ENCODE measurements at regions of chr20 and their contacts with region 1.

Region 1: DNA sequence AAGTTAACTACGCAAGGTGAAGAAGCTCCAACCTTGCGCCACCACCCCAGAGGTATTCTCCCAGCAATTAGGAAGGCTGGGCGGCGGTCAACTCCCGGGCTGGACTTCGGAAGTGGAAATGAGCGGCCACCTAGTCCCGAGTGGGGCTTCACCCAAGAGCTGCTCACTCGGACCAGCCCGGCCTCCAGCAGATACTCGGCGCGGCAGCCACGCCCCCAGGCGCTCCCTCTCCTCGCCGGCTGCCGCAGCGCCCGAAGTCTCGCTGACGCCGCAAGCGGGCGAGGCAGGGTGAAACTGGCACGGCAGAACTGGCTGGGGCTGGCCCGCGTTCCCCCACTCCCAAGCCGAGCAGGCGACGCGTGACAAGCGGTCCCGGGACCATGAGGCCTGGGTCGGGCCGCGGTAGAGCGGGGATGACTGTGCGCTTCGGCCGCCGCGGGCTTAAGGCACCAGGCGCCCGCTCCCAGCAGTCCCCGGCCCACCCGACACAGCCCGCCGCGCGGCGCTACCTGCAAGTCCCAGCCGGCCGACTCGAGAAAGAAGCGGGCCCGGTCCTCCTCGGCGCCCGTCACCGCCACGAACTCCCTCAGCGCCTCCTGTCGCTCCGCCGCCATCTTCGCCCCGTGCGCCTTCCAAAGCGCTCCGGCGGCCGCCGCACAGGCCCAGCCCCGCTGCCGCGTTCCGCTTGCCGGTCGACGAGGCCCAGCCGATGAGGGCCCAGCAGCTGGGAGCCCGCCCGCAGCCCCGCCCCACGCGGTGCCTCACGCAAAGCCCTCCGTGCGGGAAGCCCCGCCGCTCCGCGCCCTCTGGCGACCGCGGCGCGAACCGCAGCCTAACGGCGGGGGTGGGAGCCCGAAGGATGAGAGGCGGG is at the start of gene NSFL1C:
- DNase-seq: peak; percentile 91
- H3K4me3 Mint-ChIP-seq: peak within 1 kb of the TSS; percentile 78
- H3K27ac Mint-ChIP-seq: peak within 1 kb of the TSS; percentile 66
- H3K4me1 Mint-ChIP-seq: peaks cover 38% of the 10 kb centered on the region
- H3K27me3 Mint-ChIP-seq: no peaks in the 10 kb centered on the region
- CTCF ChIP-seq: peak; percentile 99
- total RNA-seq, gene NSFL1C: 63.3 and 76.1 TPM in 2 replicates

Region 2: DNA sequence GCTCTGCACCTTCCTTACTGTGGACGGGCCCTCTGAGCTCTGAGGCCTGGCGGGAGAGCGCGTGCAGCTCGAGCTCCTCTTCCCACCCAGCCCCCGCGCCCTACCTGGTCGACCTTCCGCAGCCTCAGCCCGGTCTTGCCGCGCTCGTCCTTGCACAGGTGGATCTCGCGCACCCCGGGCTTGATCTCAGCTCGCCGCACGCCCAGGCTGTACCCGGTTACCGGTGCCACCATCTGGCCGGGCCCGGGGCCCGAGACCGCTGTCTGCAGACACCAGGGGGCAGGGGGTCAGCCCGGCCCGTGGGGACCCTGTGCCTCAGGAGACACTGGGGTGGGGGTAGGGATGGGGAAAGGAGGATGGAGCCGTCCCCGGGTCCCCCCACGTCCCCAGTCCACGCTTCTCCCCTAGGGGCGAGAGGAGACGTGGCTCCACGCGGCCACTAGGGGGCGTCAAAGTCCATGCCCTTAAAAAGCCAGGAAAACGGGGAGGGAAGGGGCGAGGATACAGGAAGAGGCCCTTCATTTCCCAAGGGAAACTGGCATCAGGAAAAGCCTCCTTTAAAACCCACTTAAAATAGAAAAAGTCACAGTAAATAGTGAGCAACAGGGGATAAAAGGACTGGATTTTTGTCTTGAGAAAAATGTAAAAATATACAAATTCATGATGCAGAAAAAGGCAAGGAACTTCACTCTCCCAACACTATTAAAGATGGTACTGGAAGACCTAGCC is 153.0 kb before region 1 on chr20:
- CTCF ChIA-PET with region 1: interaction called, 5 read pairs
- POLR2A ChIA-PET with region 1: interaction called, 5 read pairs
- intact Hi-C with region 1: loop called (anchors 10 kb)
- DNase-seq: peak; percentile 68
- H3K4me3 Mint-ChIP-seq: no peak overlapping the region
- H3K27ac Mint-ChIP-seq: no peak overlapping the region
- H3K4me1 Mint-ChIP-seq: no peaks in the 10 kb centered on the region
- H3K27me3 Mint-ChIP-seq: no peaks in the 10 kb centered on the region
- CTCF ChIP-seq: peak; percentile 94

Region 3: DNA sequence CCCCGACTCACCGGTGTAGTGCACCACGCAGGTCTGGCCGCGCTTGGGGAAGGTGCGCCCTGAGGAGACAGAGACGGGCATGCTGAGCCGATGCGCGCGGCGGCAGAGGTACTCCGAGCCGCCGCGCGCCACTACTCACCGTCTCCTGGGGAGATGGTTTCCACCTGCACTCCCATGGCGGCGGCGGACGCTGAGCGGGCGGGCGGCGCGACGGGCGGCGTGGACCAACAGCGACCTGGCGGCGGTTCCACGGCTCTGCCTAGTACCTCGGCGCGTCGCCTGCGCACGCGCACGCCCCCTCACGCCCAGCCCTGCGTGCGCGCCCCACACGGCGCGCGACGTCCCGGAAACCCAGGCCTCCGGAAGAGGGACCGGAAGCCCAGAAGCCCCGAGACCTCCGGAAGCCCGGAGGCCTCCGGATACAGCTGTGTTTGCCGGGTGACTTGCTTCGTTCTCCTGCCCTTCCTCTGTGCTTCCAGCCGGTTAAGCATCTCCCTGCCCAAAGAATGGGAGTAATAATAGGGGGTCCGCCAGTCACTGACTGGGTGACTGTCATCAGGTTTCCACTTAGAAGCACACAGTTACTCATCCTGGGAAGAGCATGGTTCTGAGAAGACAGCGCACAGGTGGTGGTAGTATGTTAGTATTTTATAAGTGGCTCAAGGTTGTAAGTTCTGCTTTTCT is 73.5 kb before region 1 on chr20 and contains the start of gene FKBP1A:
- CTCF ChIA-PET with region 1: interaction called, 3 read pairs
- POLR2A ChIA-PET with region 1: interaction called, 30 read pairs
- intact Hi-C with region 1: loop called (anchors 1 kb)
- DNase-seq: peak; percentile 90
- H3K4me3 Mint-ChIP-seq: peak within 1 kb of the TSS; percentile 83
- H3K27ac Mint-ChIP-seq: peak within 1 kb of the TSS; percentile 91
- H3K4me1 Mint-ChIP-seq: peaks cover 31% of the 10 kb centered on the region
- H3K27me3 Mint-ChIP-seq: no peaks in the 10 kb centered on the region
- CTCF ChIP-seq: no peak
- total RNA-seq, gene FKBP1A: 209 and 217 TPM in 2 replicates

Region 4: DNA sequence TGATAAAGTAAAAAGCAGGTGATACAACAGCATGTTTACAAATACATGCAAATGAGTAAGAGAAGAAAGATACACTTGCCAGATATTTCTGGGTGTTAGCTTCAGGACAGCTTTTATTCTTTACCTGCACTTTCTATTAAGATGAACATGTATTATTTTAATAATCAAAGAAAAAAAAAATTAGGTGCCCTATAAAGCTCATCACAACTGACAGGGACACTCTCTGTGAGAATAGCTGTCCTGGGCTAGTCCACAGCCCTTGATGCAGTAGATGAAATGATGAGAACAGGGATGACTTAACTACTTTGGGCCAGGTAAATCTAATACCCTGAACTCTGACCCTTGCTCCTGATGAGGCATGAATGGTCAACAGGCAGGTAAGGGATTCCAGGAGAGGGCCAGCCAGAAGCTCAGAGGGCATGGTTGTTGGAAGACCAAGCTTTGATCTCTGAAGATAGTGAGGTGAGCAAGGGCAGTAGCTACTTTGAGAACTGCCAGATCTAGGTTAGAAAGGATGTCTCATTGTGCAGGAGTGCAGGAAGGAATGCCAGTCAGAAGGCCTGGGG is 15.4 kb before region 1 on chr20:
- CTCF ChIA-PET with region 1: interaction called, 8 read pairs
- POLR2A ChIA-PET with region 1: interaction called, 20 read pairs
- intact Hi-C with region 1: no loop called
- DNase-seq: no peak
- H3K4me3 Mint-ChIP-seq: no peak overlapping the region
- H3K27ac Mint-ChIP-seq: no peak overlapping the region
- H3K4me1 Mint-ChIP-seq: no peaks in the 10 kb centered on the region
- H3K27me3 Mint-ChIP-seq: no peaks in the 10 kb centered on the region
- CTCF ChIP-seq: no peak

Region 5: GRCh38 chr20:1456300-1456699 is 10.1 kb before region 1 on chr20:
- CTCF ChIA-PET with region 1: interaction called, 10 read pairs
- POLR2A ChIA-PET with region 1: interaction called, 20 read pairs
- intact Hi-C with region 1: no loop called
- DNase-seq: no peak
- H3K4me3 Mint-ChIP-seq: no peak overlapping the region
- H3K27ac Mint-ChIP-seq: no peak overlapping the region
- H3K4me1 Mint-ChIP-seq: no peaks in the 10 kb centered on the region
- H3K27me3 Mint-ChIP-seq: no peaks in the 10 kb centered on the region
- CTCF ChIP-seq: no peak

Region 6: DNA sequence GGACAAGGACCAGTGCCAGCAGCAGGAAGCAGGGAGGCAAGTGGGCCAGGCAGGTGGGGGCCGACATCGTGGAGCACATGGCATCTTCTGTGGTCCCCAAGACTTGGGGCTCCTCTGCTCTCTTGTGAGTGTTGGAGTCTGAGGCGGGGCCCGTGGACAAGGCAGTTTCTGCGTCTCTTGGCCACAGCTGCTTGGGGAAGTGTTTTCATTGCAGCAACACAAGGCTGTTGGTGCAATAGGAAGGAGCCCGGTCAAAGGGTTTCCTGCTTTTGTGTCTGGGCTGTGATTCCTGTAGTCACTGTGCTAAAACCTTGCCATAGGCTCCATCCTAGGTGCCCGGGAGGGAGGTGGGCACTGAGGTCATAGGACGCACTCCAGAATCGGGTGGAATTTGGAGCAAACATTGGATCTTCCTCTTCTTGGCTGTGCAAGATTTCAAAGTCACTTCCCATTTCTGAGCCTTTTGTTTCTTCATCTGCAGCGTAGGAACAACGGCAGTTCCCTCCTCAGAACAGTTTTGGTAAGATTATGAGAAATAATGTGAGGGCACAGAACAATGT is 24.9 kb after region 1 on chr20 and contains the start of gene SIRPB2:
- CTCF ChIA-PET with region 1: interaction called, 46 read pairs
- POLR2A ChIA-PET with region 1: interaction called, 107 read pairs
- intact Hi-C with region 1: no loop called
- DNase-seq: no peak
- H3K4me3 Mint-ChIP-seq: peak within 1 kb of the TSS; percentile 12
- H3K27ac Mint-ChIP-seq: peak within 1 kb of the TSS; percentile 92
- H3K4me1 Mint-ChIP-seq: peaks cover 18% of the 10 kb centered on the region
- H3K27me3 Mint-ChIP-seq: no peaks in the 10 kb centered on the region
- CTCF ChIP-seq: no peak
- total RNA-seq, gene SIRPB2: 1.3 and 1.8 TPM in 2 replicates

Region 7: DNA sequence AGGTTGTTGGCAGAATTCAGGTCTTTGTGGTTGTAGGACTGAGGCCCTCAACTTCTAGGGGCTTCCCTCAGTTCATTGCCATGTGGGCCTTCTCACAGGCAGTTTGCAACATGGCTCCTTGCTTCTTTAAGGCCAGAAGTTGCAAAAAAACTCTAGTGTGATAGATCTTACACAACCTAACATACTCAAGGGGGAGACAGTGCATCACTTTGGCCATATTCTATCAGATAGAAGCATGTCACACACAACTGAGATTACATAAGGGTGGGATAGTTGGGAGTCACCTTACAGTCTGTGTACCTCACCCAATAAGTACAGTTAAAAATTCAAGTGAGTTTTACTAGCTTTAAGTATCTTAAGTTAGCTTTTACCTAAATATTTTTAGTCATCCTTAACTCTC is 89.5 kb after region 1 on chr20:
- CTCF ChIA-PET with region 1: no interaction called
- POLR2A ChIA-PET with region 1: no interaction called
- intact Hi-C with region 1: no loop called
- DNase-seq: no peak
- H3K4me3 Mint-ChIP-seq: no peak overlapping the region
- H3K27ac Mint-ChIP-seq: no peak overlapping the region
- H3K4me1 Mint-ChIP-seq: no peaks in the 10 kb centered on the region
- H3K27me3 Mint-ChIP-seq: no peaks in the 10 kb centered on the region
- CTCF ChIP-seq: no peak

Region 8: GRCh38 chr20:1702328-1702727 is 235.9 kb after region 1 on chr20:
- CTCF ChIA-PET with region 1: no interaction called
- POLR2A ChIA-PET with region 1: no interaction called
- intact Hi-C with region 1: no loop called
- DNase-seq: no peak
- H3K4me3 Mint-ChIP-seq: no peak overlapping the region
- H3K27ac Mint-ChIP-seq: no peak overlapping the region
- H3K4me1 Mint-ChIP-seq: peaks cover 8% of the 10 kb centered on the region
- H3K27me3 Mint-ChIP-seq: no peaks in the 10 kb centered on the region
- CTCF ChIP-seq: no peak

Measured in MCF 10A (cell line).